Thyroid gland (tissue), 4 donors: ENCODE measurements at regions of chr17 and their contacts with region 1.

Region 1: DNA sequence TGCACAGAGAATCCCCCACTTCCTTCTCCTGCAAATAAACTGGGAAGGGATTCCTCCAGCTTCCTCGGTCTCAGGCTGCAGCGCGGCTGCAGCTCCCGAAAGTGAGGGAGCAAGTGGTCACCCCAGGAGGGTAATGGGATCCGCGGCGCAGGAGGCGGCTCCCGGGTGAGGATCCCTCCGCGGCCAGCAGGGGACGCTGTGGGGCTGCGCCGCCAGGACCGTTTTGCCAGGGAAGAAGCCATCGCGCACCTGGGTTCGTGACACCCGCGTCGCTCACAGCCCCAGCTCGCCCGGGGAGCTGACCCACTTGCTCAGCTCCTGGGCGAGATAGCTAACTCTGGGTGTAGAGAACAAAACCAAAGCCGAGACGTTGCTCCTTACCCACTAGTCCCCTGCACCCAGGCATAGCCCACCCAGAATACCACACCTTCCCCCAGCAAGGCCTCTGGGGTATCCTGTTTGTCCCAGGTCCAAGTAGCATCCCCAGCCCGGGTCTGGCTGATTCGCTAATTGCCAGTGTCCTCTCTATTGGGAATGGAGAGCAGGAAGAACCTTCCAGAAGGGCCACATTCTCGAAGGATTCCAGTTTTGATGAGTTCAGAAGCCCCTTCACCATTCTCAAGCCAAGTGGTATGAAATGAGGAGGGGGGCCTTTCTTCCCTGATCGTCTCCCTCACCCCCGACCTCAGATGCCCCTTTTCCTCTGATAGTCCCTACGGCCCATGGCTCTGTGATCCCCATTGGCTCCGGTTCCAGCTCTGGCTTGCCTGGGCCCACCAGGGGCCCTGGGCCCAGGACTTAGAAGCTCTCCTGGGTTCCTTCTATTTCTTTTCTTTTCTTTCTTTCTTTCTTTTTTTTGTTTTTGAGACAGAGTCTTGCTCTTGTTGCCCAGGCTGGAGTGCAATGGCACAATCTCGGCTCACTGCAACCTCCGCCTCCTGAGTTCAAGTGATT is 14.1 kb downstream of the CYGB start:
- DNase-seq: peak; percentile 68 to 77
- H3K4me3 ChIP-seq: no peak overlapping the region
- H3K27ac ChIP-seq: no peak overlapping the region
- H3K4me1 ChIP-seq: peaks cover 16 to 43% of the 10 kb centered on the region in 2 donors
- H3K27me3 ChIP-seq: no peaks in the 10 kb centered on the region
- CTCF ChIP-seq: peak; percentile 97 to 99 (median 99)
- POLR2A ChIP-seq: no peak

Region 2: DNA sequence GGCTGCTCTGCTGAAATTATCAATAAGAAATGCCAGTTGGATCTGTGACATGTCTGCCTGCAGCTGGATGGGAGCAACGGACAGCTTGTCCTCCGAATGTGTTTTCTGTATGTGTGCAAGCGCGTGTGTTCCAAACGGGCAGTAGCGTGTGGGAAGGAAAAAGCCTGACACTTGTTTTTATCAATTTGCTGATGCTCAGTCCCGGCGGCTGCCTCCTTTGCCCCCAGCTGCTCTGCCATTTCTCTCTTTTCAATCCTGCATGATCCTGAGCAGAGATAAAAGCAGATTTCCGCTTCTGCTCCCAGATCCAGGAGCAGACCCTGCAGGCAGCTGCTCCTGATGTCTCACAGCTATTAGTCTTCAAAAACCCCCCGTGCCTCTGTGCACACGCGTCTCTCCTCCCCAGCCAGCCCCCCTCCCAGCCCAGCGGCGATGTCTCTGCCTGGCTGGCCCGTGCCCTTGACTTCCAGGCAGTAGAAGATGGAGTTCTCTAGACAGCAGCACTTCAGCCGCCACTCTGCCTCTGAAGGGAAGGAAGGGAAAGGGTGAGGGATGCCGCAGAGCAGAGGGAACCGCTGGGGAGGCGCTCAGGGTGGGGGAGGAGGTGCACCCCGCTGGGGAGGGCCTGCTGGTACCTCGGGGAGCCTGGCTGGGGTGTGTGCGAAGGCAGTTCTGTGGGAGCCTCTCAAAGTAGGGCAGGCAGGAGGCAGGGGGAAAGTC is 20.6 kb after region 1 on chr17:
- intact Hi-C with region 1: loop called (anchors 2 kb)
- DNase-seq: no peak
- H3K4me3 ChIP-seq: no peak overlapping the region
- H3K27ac ChIP-seq: peak overlapping the region in 1 of 3 donors; percentile 61
- H3K4me1 ChIP-seq: peaks cover 16 to 48% of the 10 kb centered on the region in 2 donors
- H3K27me3 ChIP-seq: no peaks in the 10 kb centered on the region
- CTCF ChIP-seq: no peak
- POLR2A ChIP-seq: no peak

Region 3: DNA sequence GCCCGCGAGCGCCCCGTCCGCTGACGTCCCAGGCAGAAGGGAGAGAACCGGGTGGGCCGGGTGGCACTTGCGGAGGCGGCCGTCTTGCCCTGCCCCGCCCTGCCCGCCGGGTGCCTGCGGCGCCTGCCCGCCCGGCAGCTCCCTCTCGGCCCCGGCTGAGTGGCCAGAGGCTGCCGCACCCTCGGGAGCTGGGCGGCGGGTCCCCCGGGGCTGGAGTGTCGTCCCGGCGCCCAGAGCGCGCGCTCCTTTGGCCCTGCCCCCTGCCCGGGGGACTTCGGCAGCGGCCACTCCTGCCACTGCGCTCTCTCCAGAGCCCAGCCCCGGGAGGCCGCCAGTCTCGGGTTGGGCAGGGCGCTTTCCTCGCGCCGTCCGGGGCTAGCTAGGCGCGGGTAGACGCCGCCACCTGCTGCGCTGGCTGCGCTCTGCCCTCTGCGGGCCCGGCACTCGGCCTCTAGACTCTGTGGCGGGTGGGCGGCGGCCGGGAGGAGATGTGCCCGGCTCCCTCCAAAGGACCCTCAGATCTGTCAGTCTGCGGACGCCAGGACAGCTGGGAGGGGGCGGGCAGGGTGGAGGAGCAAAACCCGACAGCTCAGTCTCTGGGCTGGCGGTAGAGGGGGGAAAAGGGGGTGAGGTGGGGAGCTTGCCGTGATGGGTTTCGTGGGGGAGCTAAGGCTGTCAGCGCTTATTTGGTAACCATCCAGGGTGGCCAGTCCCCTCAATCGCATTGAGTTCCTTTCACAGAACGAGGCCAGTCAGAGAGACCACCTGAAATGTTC is 62.6 kb after region 1 on chr17 and contains the start of gene ST6GALNAC2:
- intact Hi-C with region 1: loop called (anchors 5 kb)
- DNase-seq: peak; percentile 94 to 95
- H3K4me3 ChIP-seq: peak within 1 kb of the TSS; percentile 24 to 66 (median 28)
- H3K27ac ChIP-seq: peak within 1 kb of the TSS; percentile 80 to 86 (median 83)
- H3K4me1 ChIP-seq: peaks cover 19 to 22% of the 10 kb centered on the region in 2 donors
- H3K27me3 ChIP-seq: no peaks in the 10 kb centered on the region
- CTCF ChIP-seq: peak in 4 of 6 experiments; percentile 67 to 94 (median 78)
- POLR2A ChIP-seq: peak; percentile 3 to 92
- total RNA-seq, gene ST6GALNAC2: 32.7 to 65.4 (median 42.6) TPM

Region 4: DNA sequence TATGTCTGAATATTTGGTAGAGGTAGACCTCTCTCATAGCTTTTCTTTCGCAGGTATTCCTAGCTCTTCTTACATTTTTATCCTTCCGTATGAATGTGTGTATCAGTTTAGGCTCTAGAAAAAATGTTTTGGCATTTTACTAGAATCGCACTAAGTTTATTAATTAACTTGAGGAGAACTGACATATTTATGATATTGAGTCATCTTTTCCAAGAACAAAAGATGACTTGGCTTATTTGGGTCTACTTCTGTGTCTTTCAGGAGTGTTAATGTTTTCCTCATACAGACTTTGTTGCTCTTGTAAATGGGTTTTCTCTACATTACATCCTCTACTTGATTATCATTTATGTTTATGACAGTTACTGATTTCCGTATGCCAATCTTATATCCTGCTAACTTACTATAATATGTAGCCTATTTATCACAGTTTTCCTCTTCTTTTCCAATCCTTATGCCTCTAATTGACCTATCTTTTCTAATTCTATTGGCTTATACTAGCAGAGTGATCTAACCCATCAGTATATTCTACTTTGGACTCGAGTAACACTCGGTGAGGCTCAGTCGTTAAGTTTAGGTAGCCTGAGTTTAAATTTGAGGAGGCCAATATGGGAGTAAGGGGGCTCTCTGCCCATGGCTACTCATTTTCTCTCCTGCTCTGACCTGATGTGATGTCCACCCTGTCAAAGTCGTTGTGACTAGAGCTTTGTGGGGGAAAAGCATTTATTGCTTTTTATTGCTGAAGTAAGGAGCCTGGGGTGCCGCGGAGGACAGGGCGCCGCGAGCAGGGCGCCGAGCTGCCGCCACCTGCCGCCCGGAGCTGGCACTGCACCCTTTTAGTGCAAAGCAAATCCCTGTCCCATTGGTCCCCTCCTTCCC is 100.1 kb after region 1 on chr17:
- intact Hi-C with region 1: loop called (anchors 10 kb)
- DNase-seq: peak; percentile 72 to 78
- H3K4me3 ChIP-seq: no peak overlapping the region
- H3K27ac ChIP-seq: no peak overlapping the region
- H3K4me1 ChIP-seq: no peaks in the 10 kb centered on the region
- H3K27me3 ChIP-seq: no peaks in the 10 kb centered on the region
- CTCF ChIP-seq: peak; percentile 69 to 98 (median 90)
- POLR2A ChIP-seq: no peak

Region 5: GRCh38 chr17:76659928-76660614 is 136.7 kb after region 1 on chr17:
- intact Hi-C with region 1: no loop called
- DNase-seq: peak; percentile 93 to 96
- H3K4me3 ChIP-seq: no peak overlapping the region
- H3K27ac ChIP-seq: peak overlapping the region; percentile 60 to 82 (median 74)
- H3K4me1 ChIP-seq: peaks cover 19 to 26% of the 10 kb centered on the region in 2 donors
- H3K27me3 ChIP-seq: no peaks in the 10 kb centered on the region
- CTCF ChIP-seq: no peak
- POLR2A ChIP-seq: no peak

Region 6: GRCh38 chr17:76681222-76682137 is 158.1 kb after region 1 on chr17:
- intact Hi-C with region 1: loop called (anchors 10 kb)
- DNase-seq: peak; percentile 77 to 81
- H3K4me3 ChIP-seq: no peak overlapping the region
- H3K27ac ChIP-seq: peak overlapping the region in 2 of 3 donors; percentile 24 to 62
- H3K4me1 ChIP-seq: peaks cover 12 to 54% of the 10 kb centered on the region in 2 donors
- H3K27me3 ChIP-seq: no peaks in the 10 kb centered on the region
- CTCF ChIP-seq: peak; percentile 33 to 72 (median 65)
- POLR2A ChIP-seq: no peak

Region 7: DNA sequence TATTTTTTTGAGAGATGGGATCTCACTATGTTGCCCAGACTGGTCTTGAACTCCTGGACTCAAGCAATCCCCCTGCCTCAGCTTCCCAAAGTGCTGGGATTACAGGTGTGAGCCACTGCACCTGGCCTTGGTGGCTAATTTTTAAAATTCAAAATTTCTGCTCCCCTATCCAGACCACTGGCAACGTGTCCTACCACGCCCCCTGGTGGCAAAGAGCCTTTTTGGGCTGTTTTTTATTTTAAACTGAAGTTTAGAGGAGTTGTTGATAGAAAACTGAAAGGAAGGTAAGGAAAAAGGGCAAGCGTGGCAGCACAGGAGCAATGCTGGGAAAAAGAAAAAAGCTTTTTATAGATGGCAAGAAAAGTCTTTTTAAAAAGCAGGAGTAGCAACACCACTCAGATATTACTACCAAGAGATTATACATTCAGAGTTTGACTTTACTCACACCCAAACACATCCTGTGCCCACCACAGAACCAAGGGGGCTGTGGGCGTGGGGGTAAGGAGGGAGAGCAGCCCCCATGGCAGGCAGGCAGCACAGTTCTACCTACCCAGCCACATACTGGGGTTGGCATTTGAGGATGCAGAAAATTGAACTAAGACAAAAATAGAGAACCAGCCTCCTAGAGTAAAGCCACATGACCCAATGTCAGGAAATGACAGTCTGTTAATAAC is 191.6 kb after region 1 on chr17:
- intact Hi-C with region 1: loop called (anchors 5 kb)
- DNase-seq: peak; percentile 85 to 90
- H3K4me3 ChIP-seq: no peak overlapping the region
- H3K27ac ChIP-seq: peak overlapping the region; percentile 6 to 47 (median 11)
- H3K4me1 ChIP-seq: peaks cover 8 to 31% of the 10 kb centered on the region in 2 donors
- H3K27me3 ChIP-seq: no peaks in the 10 kb centered on the region
- CTCF ChIP-seq: peak; percentile 71 to 84 (median 78)
- POLR2A ChIP-seq: no peak